Left lung (tissue), 14 donors: ENCODE measurements at regions of chr7 and their contacts with region 1.

Region 1: DNA sequence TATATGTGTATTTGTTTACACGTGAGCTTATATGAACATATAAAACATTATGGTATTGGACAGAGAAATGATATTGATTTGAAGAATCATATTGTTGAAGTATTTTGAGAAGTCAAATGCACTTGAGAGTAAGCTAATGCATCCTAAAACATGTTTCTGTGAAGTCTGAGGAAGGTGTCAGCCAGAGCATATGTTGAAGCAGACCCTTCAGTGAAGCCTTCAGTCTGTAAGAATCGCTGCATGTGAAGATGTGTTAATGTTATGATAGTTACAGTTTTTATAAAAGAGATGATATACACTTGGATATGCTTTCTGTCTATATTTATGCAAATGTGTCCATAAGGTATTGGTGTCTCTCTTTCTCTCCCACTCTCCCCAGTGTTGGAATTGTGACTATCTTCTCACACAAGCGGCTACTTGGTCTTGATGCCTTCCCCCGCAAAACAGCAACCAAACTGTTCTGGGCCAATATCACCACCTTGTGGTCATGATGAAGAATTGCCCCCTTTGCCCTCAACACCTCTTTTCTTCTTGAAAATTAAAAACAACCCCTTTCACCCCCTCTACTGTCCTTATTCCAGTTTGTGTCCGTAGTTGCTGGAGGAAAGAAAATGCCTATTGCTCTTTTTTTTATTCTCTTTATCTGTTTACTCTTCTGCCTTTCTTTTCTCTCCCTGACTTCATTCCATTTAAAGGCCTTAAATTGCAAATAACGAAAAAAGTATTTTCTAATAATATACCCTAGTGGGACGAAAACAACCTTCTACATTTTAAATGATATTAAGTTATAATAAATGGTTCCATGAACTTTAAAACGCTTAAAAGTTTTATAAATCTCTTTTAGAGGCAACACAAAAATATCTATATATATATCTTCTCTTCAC is 64.9 kb downstream of the IKZF1 start:
- DNase-seq: no peak
- ATAC-seq: peak; percentile 69
- H3K4me3 ChIP-seq: no peak overlapping the region
- H3K27ac ChIP-seq: no peak overlapping the region
- H3K4me1 ChIP-seq: no peaks in the 10 kb centered on the region
- H3K27me3 ChIP-seq: no peaks in the 10 kb centered on the region
- CTCF ChIP-seq: peak; percentile 30 to 67

Region 2: GRCh38 chr7:50212666-50213621 is 156.4 kb before region 1 on chr7:
- intact Hi-C with region 1: loop called in 1 of 2 experiments (anchors 10 kb)
- DNase-seq: no peak
- ATAC-seq: peak; percentile 59
- H3K4me3 ChIP-seq: no peak overlapping the region
- H3K27ac ChIP-seq: peak overlapping the region in 1 of 2 donors; percentile 45
- H3K4me1 ChIP-seq: peaks cover 0 to 51% of the 10 kb centered on the region in 2 donors
- H3K27me3 ChIP-seq: no peaks in the 10 kb centered on the region
- CTCF ChIP-seq: no peak

Region 3: GRCh38 chr7:50795831-50796230 is 426.4 kb after region 1 on chr7:
- intact Hi-C with region 1: no loop called
- DNase-seq: peak in 1 of 4 donors; percentile 68
- ATAC-seq: no peak
- H3K4me3 ChIP-seq: no peak overlapping the region
- H3K27ac ChIP-seq: no peak overlapping the region
- H3K4me1 ChIP-seq: peaks cover 4 to 16% of the 10 kb centered on the region in 2 donors
- H3K27me3 ChIP-seq: no peaks in the 10 kb centered on the region
- CTCF ChIP-seq: no peak